ENCODE measurements at regions of chr1 and their contacts with region 1.

Region 1: GRCh38 chr1:92485381-92486257 is 1.1 kb downstream of the GFI1 start:
- DNase-seq: peak; percentile 93
- ATAC-seq: peak; percentile 68
- H3K4me3 Mint-ChIP-seq: peak overlapping the region; percentile 99
- H3K27ac Mint-ChIP-seq: peak overlapping the region; percentile 98
- H3K4me1 Mint-ChIP-seq: peaks cover 26% of the 10 kb centered on the region
- H3K27me3 Mint-ChIP-seq: no peaks in the 10 kb centered on the region

Region 2: DNA sequence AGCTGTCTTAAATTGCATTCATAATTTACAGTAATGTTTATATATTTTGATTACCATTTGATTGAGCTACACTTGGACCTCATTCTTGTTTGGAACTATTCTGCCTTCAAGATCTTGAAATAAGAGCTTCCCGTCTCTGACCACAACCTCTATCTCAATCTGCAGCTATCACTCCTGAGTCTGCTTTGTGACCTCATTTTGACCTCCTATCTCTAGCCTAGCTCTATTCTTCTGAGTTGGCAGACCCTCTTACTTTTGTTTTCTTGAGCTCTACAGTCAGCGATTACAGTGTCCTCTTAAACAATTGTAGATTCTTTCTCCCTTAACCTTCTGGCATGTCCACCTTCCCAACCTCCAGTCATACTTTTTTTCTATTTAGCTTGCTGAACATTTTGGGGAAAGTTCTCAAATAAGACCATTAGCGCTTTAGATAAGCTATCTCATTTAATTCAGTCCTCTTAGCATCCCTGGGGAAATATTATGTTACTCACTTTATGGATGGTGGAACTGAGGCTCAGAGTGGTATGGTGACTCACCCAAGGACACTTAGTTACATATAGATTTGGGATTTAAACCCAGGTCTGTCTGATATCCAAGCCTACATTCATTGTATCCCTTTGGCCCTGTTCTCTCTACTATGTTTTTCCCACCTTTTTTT is 167.7 kb before region 1 on chr1:
- POLR2A ChIA-PET with region 1: interaction called, 193 read pairs
- DNase-seq: no peak
- ATAC-seq: peak; percentile 74
- H3K4me3 Mint-ChIP-seq: peak overlapping the region; percentile 75
- H3K27ac Mint-ChIP-seq: peak overlapping the region; percentile 80
- H3K4me1 Mint-ChIP-seq: peaks cover 51% of the 10 kb centered on the region
- H3K27me3 Mint-ChIP-seq: no peaks in the 10 kb centered on the region

Region 3: GRCh38 chr1:92380867-92381266 is 104.8 kb before region 1 on chr1:
- POLR2A ChIA-PET with region 1: no interaction called
- DNase-seq: no peak
- ATAC-seq: no peak
- H3K4me3 Mint-ChIP-seq: no peak overlapping the region
- H3K27ac Mint-ChIP-seq: no peak overlapping the region
- H3K4me1 Mint-ChIP-seq: peaks cover 13% of the 10 kb centered on the region
- H3K27me3 Mint-ChIP-seq: no peaks in the 10 kb centered on the region

Region 4: GRCh38 chr1:92411511-92411910 is 74.1 kb before region 1 on chr1:
- POLR2A ChIA-PET with region 1: interaction called, 11 read pairs
- DNase-seq: no peak
- ATAC-seq: peak; percentile 37
- H3K4me3 Mint-ChIP-seq: no peak overlapping the region
- H3K27ac Mint-ChIP-seq: no peak overlapping the region
- H3K4me1 Mint-ChIP-seq: peaks cover 29% of the 10 kb centered on the region
- H3K27me3 Mint-ChIP-seq: no peaks in the 10 kb centered on the region

Region 5: GRCh38 chr1:92424381-92424780 is 61.2 kb before region 1 on chr1:
- POLR2A ChIA-PET with region 1: no interaction called
- DNase-seq: no peak
- ATAC-seq: no peak
- H3K4me3 Mint-ChIP-seq: no peak overlapping the region
- H3K27ac Mint-ChIP-seq: no peak overlapping the region
- H3K4me1 Mint-ChIP-seq: peaks cover 2% of the 10 kb centered on the region
- H3K27me3 Mint-ChIP-seq: no peaks in the 10 kb centered on the region

Region 6: DNA sequence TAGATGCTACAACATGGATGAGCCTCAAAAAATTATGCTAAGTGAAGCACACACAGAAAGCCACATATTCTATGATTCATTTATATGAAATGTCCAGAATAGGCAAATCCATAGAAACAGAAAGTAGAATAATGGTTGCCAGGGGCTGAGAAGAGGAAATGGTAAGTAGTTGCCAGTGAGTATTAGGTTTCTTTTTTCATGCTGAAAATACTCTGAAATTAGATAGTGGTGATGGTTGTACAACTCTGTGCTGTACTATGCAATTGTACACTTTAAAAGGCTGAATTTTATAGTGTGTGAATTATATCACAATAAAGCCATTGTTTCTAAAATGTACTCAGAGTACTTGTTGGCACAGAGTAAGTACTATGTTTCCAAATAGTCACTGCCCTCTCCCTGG is 16.6 kb after region 1 on chr1:
- POLR2A ChIA-PET with region 1: interaction called, 20 read pairs
- DNase-seq: no peak
- ATAC-seq: peak; percentile 54
- H3K4me3 Mint-ChIP-seq: peak overlapping the region; percentile 44
- H3K27ac Mint-ChIP-seq: peak overlapping the region; percentile 57
- H3K4me1 Mint-ChIP-seq: peaks cover 31% of the 10 kb centered on the region
- H3K27me3 Mint-ChIP-seq: no peaks in the 10 kb centered on the region

Region 7: GRCh38 chr1:92544756-92545165 is 59.1 kb after region 1 on chr1:
- POLR2A ChIA-PET with region 1: interaction called, 209 read pairs
- DNase-seq: no peak
- ATAC-seq: peak; percentile 63
- H3K4me3 Mint-ChIP-seq: no peak overlapping the region
- H3K27ac Mint-ChIP-seq: no peak overlapping the region
- H3K4me1 Mint-ChIP-seq: peaks cover 18% of the 10 kb centered on the region
- H3K27me3 Mint-ChIP-seq: no peaks in the 10 kb centered on the region

Region 8: GRCh38 chr1:92583821-92584760 is 98.5 kb after region 1 on chr1:
- POLR2A ChIA-PET with region 1: interaction called, 47 read pairs
- DNase-seq: no peak
- ATAC-seq: peak; percentile 82
- H3K4me3 Mint-ChIP-seq: peak overlapping the region; percentile 81
- H3K27ac Mint-ChIP-seq: peak overlapping the region; percentile 93
- H3K4me1 Mint-ChIP-seq: peaks cover 38% of the 10 kb centered on the region
- H3K27me3 Mint-ChIP-seq: no peaks in the 10 kb centered on the region